Activated naive CD4-positive, alpha-beta T cell treated with anti-CD3 and anti-CD28 coated beads for 36 hours (primary cell): ENCODE measurements at regions of chr6 and their contacts with region 1.

Region 1: GRCh38 chr6:44475779-44476434 is 88.4 kb downstream of the CDC5L start:
- DNase-seq: peak; percentile 81
- H3K4me3 Mint-ChIP-seq: no peak overlapping the region
- H3K27ac Mint-ChIP-seq: no peak overlapping the region
- H3K4me1 Mint-ChIP-seq: no peaks in the 10 kb centered on the region
- H3K27me3 Mint-ChIP-seq: no peaks in the 10 kb centered on the region

Region 2: GRCh38 chr6:43491750-43492661 is 983.9 kb before region 1 on chr6:
- CTCF ChIA-PET with region 1: no interaction called
- intact Hi-C with region 1: no loop called
- DNase-seq: no peak
- H3K4me3 Mint-ChIP-seq: no peak overlapping the region
- H3K27ac Mint-ChIP-seq: no peak overlapping the region
- H3K4me1 Mint-ChIP-seq: peaks cover 21% of the 10 kb centered on the region
- H3K27me3 Mint-ChIP-seq: no peaks in the 10 kb centered on the region

Region 3: GRCh38 chr6:44456070-44456965 is 19.6 kb before region 1 on chr6:
- CTCF ChIA-PET with region 1: interaction called, 13 read pairs
- intact Hi-C with region 1: no loop called
- DNase-seq: peak; percentile 56
- H3K4me3 Mint-ChIP-seq: no peak overlapping the region
- H3K27ac Mint-ChIP-seq: no peak overlapping the region
- H3K4me1 Mint-ChIP-seq: no peaks in the 10 kb centered on the region
- H3K27me3 Mint-ChIP-seq: peaks cover 3% of the 10 kb centered on the region

Region 4: DNA sequence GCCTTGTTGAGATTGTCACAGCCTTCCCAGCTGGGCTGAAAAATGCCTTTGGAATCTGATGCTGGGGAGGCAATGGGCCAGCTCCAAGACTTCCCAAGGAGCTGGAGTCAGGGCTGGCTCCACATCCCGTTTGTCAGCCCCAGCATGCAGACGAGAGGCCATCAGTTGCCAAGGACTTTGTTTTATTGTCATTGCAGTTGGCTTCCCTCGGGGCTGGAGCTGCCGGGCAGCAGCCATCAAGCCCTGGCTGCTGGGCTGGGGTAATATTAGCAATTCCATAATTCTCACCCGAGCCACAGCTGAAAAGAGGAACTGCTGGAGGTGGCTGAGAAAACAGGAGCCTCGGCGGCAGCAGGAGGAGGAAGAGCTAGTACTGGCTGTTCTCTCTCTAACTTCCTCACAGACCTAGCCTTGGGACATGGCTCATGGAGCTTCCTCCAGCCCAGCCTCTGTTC is 94.1 kb after region 1 on chr6:
- CTCF ChIA-PET with region 1: interaction called, 9 read pairs
- intact Hi-C with region 1: loop called (anchors 5 kb)
- DNase-seq: no peak
- H3K4me3 Mint-ChIP-seq: no peak overlapping the region
- H3K27ac Mint-ChIP-seq: no peak overlapping the region
- H3K4me1 Mint-ChIP-seq: no peaks in the 10 kb centered on the region
- H3K27me3 Mint-ChIP-seq: no peaks in the 10 kb centered on the region

Region 5: DNA sequence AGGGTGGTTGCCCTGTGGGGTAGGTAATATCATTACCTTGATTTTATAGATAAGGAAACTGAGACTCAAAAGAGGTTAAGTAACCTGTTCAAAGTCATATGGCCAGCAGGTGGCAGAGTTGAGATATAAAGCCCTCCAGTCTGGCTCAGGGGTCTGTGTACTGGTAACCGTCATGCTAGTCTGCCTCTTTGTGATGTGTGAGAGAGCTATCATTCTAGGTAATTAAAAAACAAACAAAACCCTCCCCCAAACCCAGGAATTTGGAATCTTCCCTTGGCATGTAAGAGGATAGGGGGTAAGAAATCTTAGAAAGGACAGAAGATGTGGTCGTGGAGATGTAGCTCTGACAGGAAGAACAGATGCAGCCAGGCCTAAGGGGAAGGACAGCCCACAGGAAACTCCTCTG is 117.6 kb after region 1 on chr6:
- CTCF ChIA-PET with region 1: interaction called, 16 read pairs
- intact Hi-C with region 1: no loop called
- DNase-seq: peak; percentile 78
- H3K4me3 Mint-ChIP-seq: no peak overlapping the region
- H3K27ac Mint-ChIP-seq: no peak overlapping the region
- H3K4me1 Mint-ChIP-seq: peaks cover 3% of the 10 kb centered on the region
- H3K27me3 Mint-ChIP-seq: peaks cover 4% of the 10 kb centered on the region

Region 6: DNA sequence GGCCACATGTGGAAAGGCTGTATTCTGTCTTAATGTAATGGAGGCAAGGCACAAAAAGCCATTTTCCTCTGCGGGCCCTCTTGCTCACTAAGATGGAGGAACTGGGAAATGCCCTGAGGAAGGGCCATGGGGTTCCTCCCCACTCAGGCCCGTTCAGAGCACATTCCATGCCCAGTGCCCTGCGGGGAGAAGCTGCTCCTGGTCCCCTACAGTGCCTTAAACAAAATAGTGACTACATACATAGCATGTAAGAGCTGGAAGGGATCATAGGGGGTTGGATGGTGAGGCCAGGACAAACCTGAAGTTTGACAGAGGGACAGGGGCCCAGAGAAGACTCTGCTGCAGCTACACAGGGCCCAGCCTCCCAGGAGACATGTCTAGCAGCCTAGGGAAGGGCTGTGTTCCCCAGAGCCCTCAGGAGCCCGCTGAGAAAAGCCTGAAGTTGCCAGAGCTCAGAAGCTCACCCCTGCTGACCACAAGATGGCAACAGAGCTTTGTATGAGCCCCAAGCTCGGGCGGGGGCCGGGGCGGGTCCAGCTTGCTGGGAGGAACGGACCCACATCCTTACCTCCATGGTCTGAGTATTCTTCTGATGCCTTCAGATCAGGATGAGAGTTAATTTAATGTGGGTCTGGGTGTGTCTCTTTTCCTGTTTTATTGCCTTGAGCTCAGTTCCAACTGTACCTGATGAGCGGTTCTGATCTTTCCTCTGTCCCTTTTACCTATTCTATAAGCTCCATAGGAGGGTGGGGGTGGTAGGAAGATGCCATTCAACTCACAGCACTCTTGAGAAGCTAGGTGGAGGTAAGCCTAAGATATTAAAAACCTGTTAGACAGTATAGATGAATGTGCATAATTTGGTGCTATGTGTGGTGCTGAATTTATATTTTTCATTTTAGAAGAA is 154.5 kb after region 1 on chr6:
- CTCF ChIA-PET with region 1: interaction called, 16 read pairs
- intact Hi-C with region 1: no loop called
- DNase-seq: peak; percentile 50
- H3K4me3 Mint-ChIP-seq: no peak overlapping the region
- H3K27ac Mint-ChIP-seq: no peak overlapping the region
- H3K4me1 Mint-ChIP-seq: peaks cover 13% of the 10 kb centered on the region
- H3K27me3 Mint-ChIP-seq: no peaks in the 10 kb centered on the region

Region 7: DNA sequence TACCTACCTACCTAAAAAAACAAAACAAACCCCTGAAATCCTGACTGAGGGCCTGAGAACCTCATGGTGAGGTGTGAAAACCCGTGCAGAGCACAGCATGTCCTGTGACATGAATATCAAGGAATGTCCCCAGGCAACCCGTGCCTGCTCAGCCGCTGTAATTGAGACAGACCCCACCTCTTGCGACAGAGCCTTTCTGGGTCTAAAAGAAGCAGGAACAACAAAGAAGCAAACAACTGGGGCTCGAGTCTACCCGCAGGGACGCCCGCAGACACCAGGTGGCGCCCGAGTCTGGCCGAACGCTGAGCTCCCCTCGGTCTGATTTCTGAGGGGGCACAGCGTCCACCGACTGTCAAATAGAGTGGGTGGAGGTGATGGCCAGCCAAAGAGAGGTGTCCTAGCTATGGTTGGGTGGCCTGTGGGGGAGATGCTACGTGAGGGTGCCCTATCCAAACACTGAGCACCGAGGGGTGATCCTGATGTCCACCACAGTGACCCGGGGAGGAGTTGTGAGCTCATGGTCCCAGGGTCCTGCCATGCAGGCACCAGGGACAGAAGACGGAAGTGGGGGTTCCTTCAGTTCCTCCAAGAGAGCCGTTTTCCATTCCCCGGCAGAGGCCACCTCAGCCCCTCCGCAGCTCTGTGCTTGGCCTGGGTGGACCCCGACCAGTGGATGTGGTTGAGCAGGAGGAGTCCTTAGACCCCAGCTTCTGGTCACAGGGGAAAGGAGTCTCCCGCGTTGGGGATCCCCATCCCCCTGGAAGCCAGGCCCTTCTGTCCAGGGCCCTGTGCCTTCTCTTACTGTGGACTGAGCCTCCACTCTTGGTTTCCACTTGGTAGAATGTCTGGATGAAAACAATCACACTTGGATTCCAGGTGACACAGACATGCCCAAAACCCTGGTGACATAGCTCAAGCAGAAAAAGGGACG is 179.8 kb after region 1 on chr6:
- CTCF ChIA-PET with region 1: interaction called, 11 read pairs
- intact Hi-C with region 1: loop called (anchors 2 kb)
- DNase-seq: peak; percentile 81
- H3K4me3 Mint-ChIP-seq: peak overlapping the region; percentile 38
- H3K27ac Mint-ChIP-seq: peak overlapping the region; percentile 62
- H3K4me1 Mint-ChIP-seq: peaks cover 10% of the 10 kb centered on the region
- H3K27me3 Mint-ChIP-seq: no peaks in the 10 kb centered on the region

Region 8: DNA sequence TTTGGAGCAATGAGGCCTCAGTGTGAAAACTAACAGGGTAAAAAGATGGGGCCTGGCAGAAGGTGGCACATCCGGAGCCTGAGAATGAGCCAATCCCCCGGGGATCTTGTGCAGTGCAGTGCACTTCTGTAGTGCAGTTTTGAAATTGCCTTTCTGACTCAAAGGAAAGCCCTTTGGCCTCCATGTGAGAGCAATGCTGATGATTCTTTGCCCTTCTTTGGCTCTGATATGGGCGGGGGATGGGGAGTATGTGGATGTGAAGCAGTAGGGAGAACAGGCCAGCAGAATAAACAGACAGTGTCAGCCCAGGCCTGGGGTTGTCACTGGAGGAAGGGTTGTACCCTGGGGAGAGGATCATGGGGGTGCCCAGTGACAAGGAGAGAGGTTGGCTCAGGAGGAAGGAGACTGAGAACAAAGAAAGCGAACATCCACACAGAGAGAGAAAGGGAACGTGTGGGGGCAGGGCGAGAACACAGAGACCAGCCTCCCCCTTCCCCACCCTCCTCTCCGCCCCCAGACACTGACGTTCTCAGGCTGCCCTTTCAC is 262.8 kb after region 1 on chr6:
- CTCF ChIA-PET with region 1: no interaction called
- intact Hi-C with region 1: no loop called
- DNase-seq: no peak
- H3K4me3 Mint-ChIP-seq: no peak overlapping the region
- H3K27ac Mint-ChIP-seq: no peak overlapping the region
- H3K4me1 Mint-ChIP-seq: peaks cover 12% of the 10 kb centered on the region
- H3K27me3 Mint-ChIP-seq: no peaks in the 10 kb centered on the region

Region 9: DNA sequence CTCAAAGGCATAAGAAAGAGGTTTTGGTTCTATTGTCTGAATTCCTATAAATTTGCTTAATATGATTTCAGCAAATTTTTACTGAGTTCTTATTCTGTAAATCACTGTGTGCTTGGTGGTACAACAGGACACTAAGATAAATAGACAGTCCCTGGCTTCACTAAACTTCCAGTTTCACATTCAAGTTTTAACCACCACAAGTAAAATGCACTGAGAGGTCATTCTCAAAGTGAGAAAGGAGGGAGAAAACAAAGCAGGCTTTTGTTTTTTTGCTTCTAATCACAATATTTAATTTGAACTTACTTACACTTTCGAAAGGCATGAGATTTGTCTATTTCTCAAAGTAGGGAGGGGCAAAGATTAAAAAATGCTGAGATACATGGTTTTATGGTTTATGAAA is 357.3 kb after region 1 on chr6:
- CTCF ChIA-PET with region 1: no interaction called
- intact Hi-C with region 1: no loop called
- DNase-seq: no peak
- H3K4me3 Mint-ChIP-seq: no peak overlapping the region
- H3K27ac Mint-ChIP-seq: no peak overlapping the region
- H3K4me1 Mint-ChIP-seq: peaks cover 26% of the 10 kb centered on the region
- H3K27me3 Mint-ChIP-seq: no peaks in the 10 kb centered on the region

Region 10: GRCh38 chr6:46410334-46410953 is 1934.5 kb after region 1 on chr6:
- CTCF ChIA-PET with region 1: no interaction called
- intact Hi-C with region 1: loop called (anchors 5 kb)
- DNase-seq: peak; percentile 53
- H3K4me3 Mint-ChIP-seq: no peak overlapping the region
- H3K27ac Mint-ChIP-seq: no peak overlapping the region
- H3K4me1 Mint-ChIP-seq: no peaks in the 10 kb centered on the region
- H3K27me3 Mint-ChIP-seq: no peaks in the 10 kb centered on the region